Prostate gland (tissue), 2 donors: ENCODE measurements at regions of chr12 and their contacts with region 1.

Region 1: DNA sequence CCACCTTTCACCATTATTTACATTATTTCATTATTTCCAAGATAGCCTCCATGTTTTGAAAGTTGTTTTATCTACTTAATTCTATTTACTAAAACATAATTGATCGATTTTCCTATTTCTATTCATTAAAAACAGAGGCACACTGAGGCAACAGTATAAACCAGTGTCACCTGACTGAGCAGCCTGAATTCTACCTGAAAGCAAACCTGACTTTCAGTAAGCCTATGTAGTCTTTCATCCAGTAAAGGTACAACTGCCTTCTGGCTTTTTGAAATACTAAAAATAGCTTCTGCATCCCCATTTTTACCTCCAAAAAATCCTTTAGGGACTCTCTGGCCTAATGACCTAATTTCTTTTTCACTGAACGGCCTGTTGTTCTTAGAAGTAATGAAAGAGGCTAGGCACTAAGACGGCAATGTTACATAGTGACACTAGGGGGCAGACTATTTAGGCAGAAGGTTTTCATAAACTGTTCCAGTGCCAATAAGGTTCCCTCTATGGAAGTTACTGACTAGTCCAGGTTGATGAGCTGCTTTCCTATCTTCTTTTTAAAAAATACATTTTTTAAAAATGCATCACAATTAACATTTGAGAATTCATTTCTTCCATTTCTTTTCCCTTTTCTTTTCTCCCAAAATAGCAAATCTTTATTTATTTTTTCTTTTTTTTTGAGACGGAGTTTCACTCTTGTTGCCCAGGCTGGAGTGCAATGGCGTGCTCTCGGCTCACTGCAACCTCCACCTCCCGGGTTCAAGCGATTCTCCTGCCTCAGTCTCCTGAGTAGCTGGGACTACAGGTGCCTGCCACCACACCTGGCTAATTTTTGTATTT is 17.5 kb downstream of the ANAPC5 start:
- DNase-seq: peak; percentile 26
- H3K4me3 ChIP-seq: no peak overlapping the region
- H3K27ac ChIP-seq: no peak overlapping the region
- H3K4me1 ChIP-seq: no peaks in the 10 kb centered on the region
- H3K27me3 ChIP-seq: no peaks in the 10 kb centered on the region
- CTCF ChIP-seq: peak; percentile 80 to 82 (median 81)
- POLR2A ChIP-seq: no peak

Region 2: DNA sequence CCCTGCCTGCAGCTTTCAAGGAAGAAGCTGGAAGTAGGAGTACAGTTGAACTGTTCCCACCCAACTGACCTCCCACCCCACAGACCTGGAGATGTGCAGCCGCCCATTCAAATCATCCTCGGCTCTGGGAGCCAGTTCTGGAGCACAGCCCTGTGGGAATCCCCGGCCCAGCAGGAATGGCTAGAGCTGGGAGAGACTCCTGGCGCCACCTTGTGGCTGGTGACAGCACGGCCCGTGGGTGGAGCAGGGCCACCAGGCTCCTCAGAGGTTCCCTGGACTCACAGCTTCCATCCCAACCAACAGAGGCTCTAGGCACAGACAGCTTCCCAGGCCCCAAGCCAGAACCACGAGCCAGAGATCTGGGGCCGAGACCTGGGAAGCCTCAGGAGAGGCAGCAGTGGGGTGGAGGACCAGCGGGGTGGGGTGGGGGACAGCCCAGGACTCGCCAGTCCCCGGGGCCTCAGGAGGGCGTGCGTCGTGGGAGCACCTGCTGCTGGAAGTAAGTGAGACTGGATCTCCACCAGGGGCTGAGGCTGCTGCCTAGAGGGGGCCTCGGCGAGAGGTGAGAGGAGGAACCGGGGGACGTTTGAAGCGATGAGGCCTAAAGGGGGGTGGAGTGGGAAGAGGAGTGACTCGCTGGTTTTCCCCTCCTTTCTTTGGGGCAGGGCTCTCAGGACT is 108.6 kb after region 1 on chr12:
- intact Hi-C with region 1: loop called (anchors 1 kb)
- DNase-seq: peak; percentile 83
- H3K4me3 ChIP-seq: no peak overlapping the region
- H3K27ac ChIP-seq: no peak overlapping the region
- H3K4me1 ChIP-seq: no peaks in the 10 kb centered on the region
- H3K27me3 ChIP-seq: no peaks in the 10 kb centered on the region
- CTCF ChIP-seq: peak; percentile 83 to 92 (median 89)
- POLR2A ChIP-seq: no peak